Endothelial cell of umbilical vein (primary cell): ENCODE measurements at regions of chr5 and their contacts with region 1.

Region 1: GRCh38 chr5:42908509-42909488 is 97.1 kb upstream of the SELENOP start:
- DNase-seq: peak; percentile 87
- H3K4me3 ChIP-seq: peak overlapping the region; percentile 31 to 75 (median 41)
- H3K27ac ChIP-seq: no peak overlapping the region
- H3K4me1 ChIP-seq: peaks cover 5% of the 10 kb centered on the region
- H3K27me3 ChIP-seq: peaks cover 23 to 34% of the 10 kb centered on the region in 2 experiments
- CTCF ChIP-seq: peak; percentile 75 to 78
- POLR2A ChIP-seq: no peak

Region 2: GRCh38 chr5:42689391-42689790 is 219.4 kb before region 1 on chr5:
- CTCF ChIA-PET with region 1: no interaction called
- POLR2A ChIA-PET with region 1: no interaction called
- dilution Hi-C with region 1: no loop called
- intact Hi-C with region 1: no loop called
- DNase-seq: no peak
- H3K4me3 ChIP-seq: no peak overlapping the region
- H3K27ac ChIP-seq: no peak overlapping the region
- H3K4me1 ChIP-seq: no peaks in the 10 kb centered on the region
- H3K27me3 ChIP-seq: no peaks in the 10 kb centered on the region
- CTCF ChIP-seq: no peak
- POLR2A ChIP-seq: no peak

Region 3: GRCh38 chr5:42828671-42829070 is 80.1 kb before region 1 on chr5:
- CTCF ChIA-PET with region 1: no interaction called
- POLR2A ChIA-PET with region 1: no interaction called
- dilution Hi-C with region 1: no loop called
- intact Hi-C with region 1: no loop called
- DNase-seq: no peak
- H3K4me3 ChIP-seq: no peak overlapping the region
- H3K27ac ChIP-seq: no peak overlapping the region
- H3K4me1 ChIP-seq: no peaks in the 10 kb centered on the region
- H3K27me3 ChIP-seq: peaks cover 0 to 2% of the 10 kb centered on the region in 2 experiments
- CTCF ChIP-seq: no peak
- POLR2A ChIP-seq: no peak

Region 4: GRCh38 chr5:42889311-42889933 is 19.4 kb before region 1 on chr5:
- CTCF ChIA-PET with region 1: interaction called, 15 read pairs
- POLR2A ChIA-PET with region 1: no interaction called
- dilution Hi-C with region 1: no loop called
- intact Hi-C with region 1: no loop called
- DNase-seq: peak; percentile 71
- H3K4me3 ChIP-seq: no peak overlapping the region
- H3K27ac ChIP-seq: no peak overlapping the region
- H3K4me1 ChIP-seq: no peaks in the 10 kb centered on the region
- H3K27me3 ChIP-seq: peaks cover 7 to 22% of the 10 kb centered on the region in 2 experiments
- CTCF ChIP-seq: peak; percentile 71 to 82
- POLR2A ChIP-seq: no peak

Region 5: DNA sequence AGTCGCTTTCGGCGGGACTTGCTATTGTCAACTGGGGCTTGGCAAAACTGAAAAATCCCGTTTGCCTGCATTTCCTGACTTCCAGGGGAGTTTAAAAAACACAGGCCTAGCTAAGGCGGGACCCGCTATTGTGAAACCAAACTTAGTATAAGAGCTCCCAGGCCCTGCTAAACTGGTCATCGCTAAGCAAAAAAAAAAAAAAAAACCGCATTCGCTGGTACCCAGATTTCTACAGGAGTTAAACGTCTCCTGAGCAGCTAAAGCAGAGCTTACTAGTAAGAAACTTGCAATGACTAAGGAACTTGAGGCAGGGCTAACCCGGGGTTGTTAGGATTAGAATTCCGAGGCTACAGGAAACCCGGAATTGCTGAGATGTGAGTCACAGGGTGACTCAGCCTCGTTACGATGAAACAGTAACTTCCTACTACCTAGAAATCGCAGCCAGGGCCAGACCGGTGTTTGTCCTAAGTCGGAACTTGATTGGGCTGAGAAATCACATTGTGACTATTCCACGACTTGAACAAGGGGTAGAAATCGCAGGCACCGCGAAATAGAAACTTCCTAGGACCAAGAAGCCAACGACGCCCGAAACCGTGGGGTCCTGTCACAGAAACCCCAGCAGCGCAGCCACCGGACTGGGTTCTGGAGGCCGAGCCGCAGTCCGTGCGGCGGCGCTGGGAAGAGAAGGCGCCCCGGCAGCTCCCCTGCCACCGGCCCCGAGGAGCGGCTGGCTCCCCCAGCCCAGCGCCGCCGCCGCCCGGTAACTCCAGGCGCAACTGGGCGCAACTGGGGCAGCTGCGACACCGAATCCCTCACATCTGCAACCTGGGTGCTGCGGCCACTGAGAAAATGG is 41.9 kb after region 1 on chr5:
- CTCF ChIA-PET with region 1: interaction called, 127 read pairs
- POLR2A ChIA-PET with region 1: no interaction called
- dilution Hi-C with region 1: no loop called
- intact Hi-C with region 1: loop called (anchors 1 kb)
- DNase-seq: peak; percentile 98
- H3K4me3 ChIP-seq: peak overlapping the region; percentile 11 to 55 (median 49)
- H3K27ac ChIP-seq: peak overlapping the region; percentile 99
- H3K4me1 ChIP-seq: peaks cover 17% of the 10 kb centered on the region
- H3K27me3 ChIP-seq: no peaks in the 10 kb centered on the region
- CTCF ChIP-seq: no peak
- POLR2A ChIP-seq: peak; percentile 86

Region 6: DNA sequence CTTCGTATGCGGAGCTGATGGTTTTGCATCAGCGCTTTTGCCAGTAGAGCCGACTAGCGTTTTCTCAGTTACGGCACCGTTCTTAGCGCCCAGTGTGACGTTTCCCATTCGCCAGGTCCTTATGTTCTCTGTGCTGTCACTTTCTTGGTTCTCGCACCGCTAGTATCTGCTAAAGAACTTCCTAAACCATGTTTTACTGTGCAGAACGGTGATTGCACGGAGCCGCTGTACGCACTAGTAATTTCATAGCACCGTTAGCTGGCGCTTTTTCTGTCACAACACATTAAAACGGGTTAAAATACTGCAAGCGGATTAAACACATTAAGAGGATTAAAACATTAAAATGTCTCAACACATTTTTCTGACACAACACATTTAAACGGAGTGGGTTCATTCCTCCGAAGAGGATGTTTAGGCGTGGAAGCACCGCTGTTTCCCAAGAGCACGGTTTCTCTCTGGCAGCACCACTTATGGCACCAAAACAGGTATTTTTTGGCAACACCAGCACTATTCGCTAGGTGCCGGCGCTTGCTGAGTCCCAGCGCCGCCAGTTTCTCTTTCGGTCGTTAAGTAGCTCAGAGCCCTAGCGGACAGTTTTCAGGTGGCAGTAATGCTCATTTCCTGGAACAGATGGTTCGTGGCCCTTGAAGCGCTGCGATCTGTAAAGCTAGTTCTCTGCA is 111.0 kb after region 1 on chr5:
- CTCF ChIA-PET with region 1: interaction called, 74 read pairs
- POLR2A ChIA-PET with region 1: interaction called, 8 read pairs
- dilution Hi-C with region 1: no loop called
- intact Hi-C with region 1: loop called (anchors 1 kb)
- DNase-seq: peak; percentile 87
- H3K4me3 ChIP-seq: peak overlapping the region; percentile 36 to 83 (median 65)
- H3K27ac ChIP-seq: peak overlapping the region; percentile 93
- H3K4me1 ChIP-seq: peaks cover 19% of the 10 kb centered on the region
- H3K27me3 ChIP-seq: no peaks in the 10 kb centered on the region
- CTCF ChIP-seq: peak; percentile 51 to 61
- POLR2A ChIP-seq: no peak

Region 7: GRCh38 chr5:43105369-43106289 is 196.8 kb after region 1 on chr5:
- CTCF ChIA-PET with region 1: interaction called, 27 read pairs
- POLR2A ChIA-PET with region 1: no interaction called
- dilution Hi-C with region 1: no loop called
- intact Hi-C with region 1: loop called (anchors 1 kb)
- DNase-seq: peak; percentile 98
- H3K4me3 ChIP-seq: peak overlapping the region in 2 of 3 experiments; percentile 20 to 29
- H3K27ac ChIP-seq: no peak overlapping the region
- H3K4me1 ChIP-seq: no peaks in the 10 kb centered on the region
- H3K27me3 ChIP-seq: no peaks in the 10 kb centered on the region
- CTCF ChIP-seq: peak; percentile 100
- POLR2A ChIP-seq: no peak

Region 8: GRCh38 chr5:43389679-43390329 is 481.0 kb after region 1 on chr5:
- CTCF ChIA-PET with region 1: interaction called, 23 read pairs
- POLR2A ChIA-PET with region 1: no interaction called
- dilution Hi-C with region 1: no loop called
- intact Hi-C with region 1: loop called (anchors 10 kb)
- DNase-seq: peak; percentile 81
- H3K4me3 ChIP-seq: no peak overlapping the region
- H3K27ac ChIP-seq: no peak overlapping the region
- H3K4me1 ChIP-seq: no peaks in the 10 kb centered on the region
- H3K27me3 ChIP-seq: no peaks in the 10 kb centered on the region
- CTCF ChIP-seq: peak; percentile 72 to 73
- POLR2A ChIP-seq: no peak